ENCODE measurements at regions of chr1 and their contacts with region 1.

Region 1: GRCh38 chr1:147545133-147545532 is 3.8 kb downstream of the BCL9 start:
- DNase-seq: peak; percentile 96
- H3K4me3 Mint-ChIP-seq: peak overlapping the region; percentile 14
- H3K27ac Mint-ChIP-seq: peak overlapping the region; percentile 64
- H3K4me1 Mint-ChIP-seq: peaks cover 70% of the 10 kb centered on the region
- H3K27me3 Mint-ChIP-seq: no peaks in the 10 kb centered on the region

Region 2: GRCh38 chr1:147494998-147495580 is 50.0 kb before region 1 on chr1:
- CTCF ChIA-PET with region 1: interaction called, 3 read pairs
- POLR2A ChIA-PET with region 1: no interaction called
- intact Hi-C with region 1: loop called (anchors 5 kb)
- DNase-seq: peak; percentile 76
- H3K4me3 Mint-ChIP-seq: no peak overlapping the region
- H3K27ac Mint-ChIP-seq: no peak overlapping the region
- H3K4me1 Mint-ChIP-seq: no peaks in the 10 kb centered on the region
- H3K27me3 Mint-ChIP-seq: no peaks in the 10 kb centered on the region

Region 3: DNA sequence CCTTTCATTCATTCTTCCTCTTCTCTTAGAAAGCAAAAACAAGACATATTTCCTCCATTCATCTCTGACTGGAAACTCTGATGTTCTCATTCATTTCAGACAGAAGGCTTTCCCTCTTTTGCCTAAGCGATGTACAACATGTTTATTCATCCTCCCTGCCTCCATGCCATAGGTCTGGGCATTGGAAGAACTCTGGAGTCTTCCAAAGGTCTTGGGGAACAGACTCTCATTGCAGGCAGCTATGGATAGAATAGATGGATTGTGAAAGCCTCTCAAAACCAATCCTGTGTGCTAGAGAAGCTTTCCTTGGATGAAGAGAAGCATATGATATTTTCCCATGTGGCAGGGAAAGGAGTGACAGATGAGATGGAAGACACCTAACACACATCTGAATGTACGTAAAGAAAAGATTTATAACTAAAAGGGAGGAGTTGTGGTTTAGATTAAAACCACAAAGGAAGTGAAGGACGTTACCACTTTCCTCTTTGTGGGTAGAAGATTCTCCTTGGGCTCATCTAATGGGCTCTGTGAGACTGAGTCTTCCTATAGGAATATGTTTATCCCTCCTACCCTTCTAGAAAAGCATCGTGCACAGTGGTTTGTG is 34.9 kb after region 1 on chr1:
- CTCF ChIA-PET with region 1: no interaction called
- POLR2A ChIA-PET with region 1: interaction called, 3 read pairs
- intact Hi-C with region 1: loop called (anchors 2 kb)
- DNase-seq: no peak
- H3K4me3 Mint-ChIP-seq: peak overlapping the region; percentile 47
- H3K27ac Mint-ChIP-seq: peak overlapping the region; percentile 71
- H3K4me1 Mint-ChIP-seq: peaks cover 26% of the 10 kb centered on the region
- H3K27me3 Mint-ChIP-seq: peaks cover 23% of the 10 kb centered on the region

Region 4: GRCh38 chr1:147599362-147600118 is 54.4 kb after region 1 on chr1:
- CTCF ChIA-PET with region 1: interaction called, 17 read pairs
- POLR2A ChIA-PET with region 1: interaction called, 24 read pairs
- intact Hi-C with region 1: loop called (anchors 1 kb)
- DNase-seq: peak; percentile 98
- H3K4me3 Mint-ChIP-seq: peak overlapping the region; percentile 82
- H3K27ac Mint-ChIP-seq: peak overlapping the region; percentile 74
- H3K4me1 Mint-ChIP-seq: peaks cover 24% of the 10 kb centered on the region
- H3K27me3 Mint-ChIP-seq: no peaks in the 10 kb centered on the region

Region 5: DNA sequence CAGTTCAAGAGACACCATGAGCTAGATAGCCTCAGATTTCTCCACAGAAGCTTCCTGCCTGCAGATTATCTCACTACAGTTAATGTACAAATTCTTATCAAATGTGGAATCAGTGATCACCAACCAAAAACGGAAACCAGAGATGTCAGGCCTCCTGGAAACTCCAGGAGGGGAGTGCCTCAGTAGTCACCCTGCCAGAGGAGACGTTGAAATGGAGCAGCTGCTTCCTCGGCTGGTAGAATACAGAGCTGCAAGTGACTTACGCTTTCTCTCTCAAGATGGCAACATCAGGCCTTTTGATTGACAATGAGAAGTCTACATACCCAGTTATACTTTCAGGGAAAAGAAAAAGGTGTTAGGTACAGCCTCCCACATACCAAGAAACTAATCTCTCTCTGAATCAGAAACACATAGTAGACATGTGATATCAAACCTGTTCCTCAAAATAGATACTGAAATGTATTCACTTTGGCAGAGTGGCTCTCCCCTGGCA is 73.0 kb after region 1 on chr1:
- CTCF ChIA-PET with region 1: no interaction called
- POLR2A ChIA-PET with region 1: interaction called, 3 read pairs
- intact Hi-C with region 1: loop called (anchors 2 kb)
- DNase-seq: peak; percentile 70
- H3K4me3 Mint-ChIP-seq: peak overlapping the region; percentile 9
- H3K27ac Mint-ChIP-seq: peak overlapping the region; percentile 68
- H3K4me1 Mint-ChIP-seq: peaks cover 23% of the 10 kb centered on the region
- H3K27me3 Mint-ChIP-seq: no peaks in the 10 kb centered on the region